Dorsolateral prefrontal cortex (tissue), 120 donors: ENCODE measurements at regions of chr4 and their contacts with region 1.

Region 1: GRCh38 chr4:85953651-85954018 is 406.2 kb downstream of the MAPK10 start:
- DNase-seq: no peak
- H3K4me3 ChIP-seq: no peak overlapping the region
- H3K27ac ChIP-seq: peak overlapping the region in 1 of 59 donors; percentile 17
- H3K27me3 ChIP-seq: no peaks in the 10 kb centered on the region
- CTCF ChIP-seq: no peak

Region 2: DNA sequence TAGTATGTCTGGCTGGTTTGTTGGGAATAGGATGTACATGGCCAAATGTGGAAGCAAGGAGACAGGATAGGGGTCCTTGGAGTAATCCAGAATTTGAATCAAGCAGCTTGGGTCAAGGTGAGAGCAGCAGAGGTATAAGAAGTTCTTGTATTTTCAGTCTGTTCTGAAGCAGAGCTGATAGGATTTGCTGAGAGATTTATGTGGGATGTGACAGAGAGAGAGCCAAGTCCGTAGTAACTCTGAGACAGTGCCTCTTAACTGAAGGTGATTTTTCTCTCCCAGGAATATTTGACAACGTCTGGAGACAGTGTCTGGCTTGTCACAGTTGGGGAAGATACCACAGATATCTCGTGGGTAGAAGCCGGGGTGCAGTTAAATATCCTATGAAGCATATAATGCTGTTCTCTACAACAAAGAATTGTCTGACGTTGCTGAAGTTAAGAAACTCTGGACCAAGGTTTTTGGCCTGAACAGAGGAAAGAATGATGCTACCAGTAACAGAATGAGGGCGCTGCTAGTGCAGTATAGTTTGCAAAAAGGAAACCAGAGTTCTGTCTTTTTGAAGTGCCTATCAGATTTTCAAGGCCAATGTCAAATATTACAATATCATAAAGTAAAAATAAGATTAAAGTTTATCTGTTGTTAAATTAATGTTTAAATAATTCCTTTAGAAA is 294.7 kb before region 1 on chr4:
- intact Hi-C with region 1: no loop called
- DNase-seq: no peak
- H3K4me3 ChIP-seq: no peak overlapping the region
- H3K27ac ChIP-seq: peak overlapping the region in 5 of 59 donors; percentile 3 to 44 (median 28)
- H3K27me3 ChIP-seq: no peaks in the 10 kb centered on the region
- CTCF ChIP-seq: no peak

Region 3: GRCh38 chr4:85826060-85826678 is 127.5 kb before region 1 on chr4:
- intact Hi-C with region 1: loop called in 1 of 2 experiments (anchors 10 kb)
- DNase-seq: no peak
- H3K4me3 ChIP-seq: peak overlapping the region in 1 of 59 donors; percentile 26
- H3K27ac ChIP-seq: peak overlapping the region in 1 of 59 donors; percentile 17
- H3K27me3 ChIP-seq: no peaks in the 10 kb centered on the region
- CTCF ChIP-seq: peak in 20 of 56 donors; percentile 11 to 39 (median 26)

Region 4: GRCh38 chr4:85909851-85910250 is 43.8 kb before region 1 on chr4:
- intact Hi-C with region 1: no loop called
- DNase-seq: no peak
- H3K4me3 ChIP-seq: no peak overlapping the region
- H3K27ac ChIP-seq: no peak overlapping the region
- H3K27me3 ChIP-seq: no peaks in the 10 kb centered on the region
- CTCF ChIP-seq: no peak

Region 5: DNA sequence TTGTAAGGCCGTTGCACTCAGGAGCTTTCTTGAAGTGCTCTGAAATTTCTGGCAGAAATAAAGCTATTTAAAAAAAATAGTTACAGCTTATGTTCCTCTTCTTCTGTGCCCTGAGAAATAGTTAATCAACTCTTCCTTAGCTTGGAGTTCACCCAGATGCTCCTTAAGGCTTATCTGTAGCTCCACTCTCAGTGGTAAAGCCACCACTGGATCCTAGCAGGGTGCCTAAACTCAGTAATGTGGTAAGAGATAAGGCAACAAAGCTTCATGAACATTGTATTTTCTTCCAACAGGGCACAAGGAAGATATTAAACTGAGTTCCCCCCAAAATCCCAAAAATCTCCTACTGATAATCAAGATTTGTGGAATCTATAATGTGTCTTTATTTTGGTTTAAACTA is 106.7 kb after region 1 on chr4:
- intact Hi-C with region 1: no loop called
- DNase-seq: no peak
- H3K4me3 ChIP-seq: no peak overlapping the region
- H3K27ac ChIP-seq: no peak overlapping the region
- H3K27me3 ChIP-seq: no peaks in the 10 kb centered on the region
- CTCF ChIP-seq: no peak